H1 (cell line): ENCODE measurements at regions of chr13 and their contacts with region 1.

Region 1: GRCh38 chr13:52896827-52897659 is 48.6 kb upstream of the PCDH8 start:
- DNase-seq: peak in 1 of 2 experiments; percentile 82
- H3K4me3 ChIP-seq: no peak overlapping the region; a peak in 1 of 8 replicates
- H3K27ac ChIP-seq: no peak overlapping the region
- H3K4me1 ChIP-seq: peaks cover 0 to 25% (median 5%) of the 10 kb centered on the region in 4 experiments; a peak in 4 of 7 replicates
- H3K27me3 ChIP-seq: no peaks in the 10 kb centered on the region; a peak in 1 of 7 replicates
- CTCF ChIP-seq: peak; percentile 70 to 75 (median 73)
- EP300 ChIP-seq: no peak
- POLR2A ChIP-seq: no peak
- RAD21 ChIP-seq: peak; percentile 67 to 68

Region 2: DNA sequence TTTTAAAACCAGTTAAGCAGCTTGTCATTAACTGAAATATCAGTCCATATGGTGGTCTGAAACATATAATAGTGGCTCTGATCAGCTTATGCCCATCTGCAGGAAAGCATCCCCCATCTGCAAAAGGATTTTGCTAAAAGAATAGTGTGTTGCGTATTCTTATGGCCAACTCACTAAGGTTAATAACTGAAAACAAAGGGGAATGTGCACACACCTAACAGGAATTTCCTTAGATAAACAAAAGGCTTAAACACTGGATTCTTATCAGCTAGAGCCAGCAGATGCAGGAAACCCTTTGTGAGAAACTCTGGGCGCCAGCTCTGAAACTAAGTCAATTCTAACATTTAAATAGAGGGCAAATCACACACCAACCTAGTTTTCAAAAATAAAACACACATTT is 468.7 kb before region 1 on chr13:
- CTCF ChIA-PET with region 1: no interaction called
- POLR2A ChIA-PET with region 1: no interaction called
- DNase-seq: no peak
- H3K4me3 ChIP-seq: no peak overlapping the region
- H3K27ac ChIP-seq: no peak overlapping the region
- H3K4me1 ChIP-seq: no peaks in the 10 kb centered on the region
- H3K27me3 ChIP-seq: no peaks in the 10 kb centered on the region
- CTCF ChIP-seq: no peak
- EP300 ChIP-seq: no peak
- POLR2A ChIP-seq: no peak
- RAD21 ChIP-seq: no peak

Region 3: DNA sequence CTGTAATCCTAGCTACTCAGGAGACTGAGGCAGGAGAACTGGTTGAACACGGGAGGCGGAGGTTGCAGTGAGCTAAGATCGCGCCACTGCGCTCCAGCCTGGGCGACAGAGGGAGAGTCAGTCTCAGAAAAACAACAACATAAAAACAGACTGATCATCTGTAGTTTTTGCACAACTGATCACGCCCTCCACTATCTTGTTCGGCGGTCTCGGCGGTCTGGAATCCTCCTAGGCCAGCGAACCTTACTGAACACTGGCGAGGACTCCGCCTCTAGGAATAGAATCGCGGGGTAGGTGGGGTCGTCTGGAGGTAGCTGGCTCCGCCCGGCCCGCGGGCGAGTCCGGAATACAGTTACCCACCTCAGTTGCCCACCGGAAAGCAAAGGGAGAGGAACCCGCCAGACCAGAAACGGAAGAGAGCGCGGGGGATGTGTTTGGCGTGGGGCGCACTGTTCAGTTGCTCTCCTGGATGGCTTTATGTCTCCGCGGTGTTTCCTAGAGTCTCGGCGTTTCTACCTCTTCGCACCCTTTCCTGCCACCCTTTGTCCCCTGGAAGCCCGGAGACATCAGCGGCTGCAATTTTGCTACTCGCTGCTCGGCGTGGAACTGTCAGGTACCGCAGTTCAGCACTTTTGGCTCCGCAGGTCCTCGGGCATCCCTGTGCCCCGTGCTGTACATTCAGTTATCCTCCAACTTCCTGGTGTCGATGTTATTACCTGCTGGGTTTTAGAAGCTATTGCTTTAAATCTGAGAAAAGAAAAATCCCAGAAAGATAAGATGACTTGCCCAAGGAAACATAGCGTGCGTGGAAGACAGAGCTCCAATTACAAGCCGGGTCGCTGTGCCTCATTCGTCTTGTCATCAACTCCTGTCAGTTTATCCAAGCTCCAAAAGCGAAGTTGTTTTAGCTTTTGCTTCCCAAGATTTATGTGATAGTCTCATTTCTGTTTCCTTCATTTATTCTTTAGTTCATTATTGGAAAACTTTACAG is 279.7 kb before region 1 on chr13:
- CTCF ChIA-PET with region 1: no interaction called
- POLR2A ChIA-PET with region 1: no interaction called
- DNase-seq: peak; percentile 57 to 87
- H3K4me3 ChIP-seq: peak overlapping the region; percentile 71 to 99 (median 93)
- H3K27ac ChIP-seq: no peak overlapping the region
- H3K4me1 ChIP-seq: no peaks in the 10 kb centered on the region
- H3K27me3 ChIP-seq: no peaks in the 10 kb centered on the region
- CTCF ChIP-seq: no peak
- EP300 ChIP-seq: no peak
- POLR2A ChIP-seq: peak in 1 of 2 experiments; percentile 83; a peak in 2 of 3 replicates
- RAD21 ChIP-seq: 0 out of 4 replicates have a peak, but pooled peaks of 1 of the 2 experiments have one; percentile 16

Region 4: DNA sequence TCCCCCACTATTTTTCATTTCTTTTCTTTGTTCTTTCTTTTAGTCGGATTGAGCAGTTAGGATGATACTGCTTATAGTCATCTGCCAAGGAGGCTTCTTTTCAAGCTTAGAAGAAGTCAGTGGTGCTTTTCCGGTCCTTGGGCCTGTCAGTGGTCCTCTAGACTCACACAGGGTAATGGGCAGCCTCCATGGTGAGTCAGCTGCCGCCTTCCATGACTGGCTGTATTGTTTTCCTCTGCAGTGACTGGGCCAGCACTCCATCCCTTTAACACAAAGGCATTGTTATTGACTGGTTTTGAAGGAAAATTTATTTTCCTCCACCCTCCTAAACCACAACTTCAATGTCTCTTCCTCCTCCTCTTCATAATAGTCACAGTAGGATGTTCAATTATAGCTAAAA is 110.3 kb before region 1 on chr13:
- CTCF ChIA-PET with region 1: no interaction called
- POLR2A ChIA-PET with region 1: no interaction called
- DNase-seq: no peak
- H3K4me3 ChIP-seq: no peak overlapping the region
- H3K27ac ChIP-seq: no peak overlapping the region
- H3K4me1 ChIP-seq: peaks cover 0 to 4% (median 0%) of the 10 kb centered on the region in 4 experiments; a peak in 1 of 7 replicates
- H3K27me3 ChIP-seq: no peaks in the 10 kb centered on the region
- CTCF ChIP-seq: no peak
- EP300 ChIP-seq: no peak
- POLR2A ChIP-seq: no peak
- RAD21 ChIP-seq: no peak

Region 5: DNA sequence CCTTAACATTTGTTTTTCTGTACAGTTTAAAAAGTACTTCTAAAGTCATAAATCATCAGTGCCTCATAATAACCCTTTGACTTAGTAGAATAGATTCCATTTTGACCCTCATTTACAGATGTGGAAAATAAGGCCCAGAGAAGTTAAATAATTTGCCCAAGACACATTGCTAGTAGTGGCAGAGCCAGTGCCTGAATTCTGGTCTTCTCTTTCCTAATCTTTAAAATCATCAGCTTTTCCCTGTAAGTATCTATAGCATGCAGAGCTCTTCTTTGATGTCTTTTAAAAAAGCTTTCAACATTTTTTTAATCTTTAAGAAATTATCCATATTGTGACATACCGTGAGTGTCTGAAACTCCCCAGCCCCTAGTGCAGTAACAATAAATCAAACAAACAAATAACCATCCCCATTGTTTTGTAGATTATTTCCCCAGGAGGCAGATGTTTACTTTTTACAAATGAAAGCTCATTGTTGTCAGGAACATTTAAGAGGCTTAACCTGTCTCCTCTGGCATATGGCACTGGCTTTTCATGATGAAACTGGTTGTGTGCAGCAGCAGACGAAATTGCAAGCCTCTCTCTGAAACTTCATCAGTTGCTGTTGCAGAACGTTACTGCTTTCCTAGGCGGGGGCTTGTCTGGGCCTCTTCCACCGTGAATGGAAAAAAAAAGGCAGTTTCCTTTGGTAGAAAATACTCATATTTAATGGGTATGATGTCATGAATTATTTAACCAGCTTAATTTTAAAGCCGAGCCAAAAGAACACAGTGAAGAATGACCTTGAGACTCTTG is 16.9 kb before region 1 on chr13:
- CTCF ChIA-PET with region 1: interaction called, 12 read pairs
- POLR2A ChIA-PET with region 1: interaction called, 3 read pairs
- DNase-seq: peak in 1 of 2 experiments; percentile 29
- H3K4me3 ChIP-seq: peak overlapping the region in 1 of 4 experiments; percentile 44; a peak in 2 of 8 replicates
- H3K27ac ChIP-seq: no peak overlapping the region
- H3K4me1 ChIP-seq: peaks cover 8 to 25% (median 21%) of the 10 kb centered on the region in 4 experiments
- H3K27me3 ChIP-seq: peaks cover 6 to 27% (median 23%) of the 10 kb centered on the region in 4 experiments
- CTCF ChIP-seq: no peak
- EP300 ChIP-seq: peak in 1 of 2 experiments; percentile 89; a peak in 1 of 3 replicates
- POLR2A ChIP-seq: no peak
- RAD21 ChIP-seq: no peak